ENCODE measurements at regions of chr18 and their contacts with region 1.

Region 1: GRCh38 chr18:31707815-31708214 is 23.4 kb upstream of the B4GALT6 start:
- DNase-seq: no peak
- H3K4me3 ChIP-seq: no peak overlapping the region
- H3K27ac ChIP-seq: no peak overlapping the region
- H3K4me1 ChIP-seq: no peaks in the 10 kb centered on the region
- H3K27me3 ChIP-seq: no peaks in the 10 kb centered on the region
- CTCF ChIP-seq: no peak
- POLR2A ChIP-seq: no peak

Region 2: GRCh38 chr18:32677578-32677977 is 969.8 kb after region 1 on chr18:
- intact Hi-C with region 1: loop called (anchors 5 kb)
- DNase-seq: no peak
- H3K4me3 ChIP-seq: no peak overlapping the region
- H3K27ac ChIP-seq: no peak overlapping the region
- H3K4me1 ChIP-seq: no peaks in the 10 kb centered on the region
- H3K27me3 ChIP-seq: no peaks in the 10 kb centered on the region
- CTCF ChIP-seq: no peak
- POLR2A ChIP-seq: no peak